HEK293 (cell line): ENCODE measurements at regions of chr19 and their contacts with region 1.

Region 1: GRCh38 chr19:11639602-11640471 is 42.6 kb downstream of the ZNF627 start:
- H3K4me3 ChIP-seq: peak overlapping the region; percentile 86
- H3K27ac ChIP-seq: peak overlapping the region; percentile 80
- H3K4me1 ChIP-seq: no peaks in the 10 kb centered on the region
- CTCF ChIP-seq: no peak

Region 2: DNA sequence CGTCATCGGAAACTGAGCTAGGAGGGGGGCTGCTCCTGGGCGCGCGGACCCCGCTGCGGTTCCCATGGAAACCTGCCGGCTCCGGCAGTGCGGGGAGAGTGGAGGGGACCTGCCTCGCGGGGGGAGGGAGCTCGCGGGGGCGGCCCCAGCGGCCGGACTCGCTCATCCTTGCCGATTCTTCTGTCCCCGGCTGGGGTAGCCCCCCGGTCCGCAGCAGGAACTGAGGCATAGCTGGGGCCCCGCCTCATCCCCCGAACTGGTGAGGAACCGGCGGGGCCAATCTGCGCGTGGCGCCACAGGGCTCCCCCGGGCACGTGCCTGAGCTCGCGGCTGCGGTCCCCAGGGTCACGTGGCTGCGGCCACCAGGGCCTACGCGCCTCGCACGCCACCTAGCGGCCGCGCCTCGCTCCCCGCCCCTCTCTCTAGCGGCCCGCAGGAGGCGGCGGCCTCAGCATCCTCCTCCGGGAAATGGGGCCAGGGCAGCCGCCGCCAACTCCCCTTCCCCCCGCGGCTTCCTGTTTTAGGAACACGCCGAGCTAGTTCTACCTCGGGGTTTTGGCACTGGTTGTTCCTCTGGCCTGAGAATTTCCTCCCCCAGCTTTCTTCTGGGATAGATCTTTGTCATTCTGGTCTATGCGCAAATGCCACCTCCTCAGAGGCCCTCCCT is 157.3 kb before region 1 on chr19:
- CTCF ChIA-PET with region 1: no interaction called
- POLR2A ChIA-PET with region 1: no interaction called
- H3K4me3 ChIP-seq: peak overlapping the region; percentile 28
- H3K27ac ChIP-seq: peak overlapping the region; percentile 33; the same call in 1 of the 2 replicates
- H3K4me1 ChIP-seq: no peaks in the 10 kb centered on the region
- CTCF ChIP-seq: peak; percentile 97

Region 3: GRCh38 chr19:11694533-11695439 is 54.9 kb after region 1 on chr19:
- CTCF ChIA-PET with region 1: interaction called, 4 read pairs
- POLR2A ChIA-PET with region 1: interaction called, 18 read pairs
- H3K4me3 ChIP-seq: peak overlapping the region; percentile 84
- H3K27ac ChIP-seq: peak overlapping the region; percentile 74
- H3K4me1 ChIP-seq: no peaks in the 10 kb centered on the region
- CTCF ChIP-seq: 0 out of 2 replicates have a peak, but pooled peaks have one; percentile 40